ENCODE measurements at regions of chr14 and their contacts with region 1.

Region 1: GRCh38 chr14:69504775-69505174 is 20.2 kb downstream of the PLEKHD1 start:
- H3K4me3 ChIP-seq: no peak overlapping the region
- H3K27ac ChIP-seq: no peak overlapping the region
- H3K4me1 ChIP-seq: peaks cover 5% of the 10 kb centered on the region
- CTCF ChIP-seq: no peak

Region 2: DNA sequence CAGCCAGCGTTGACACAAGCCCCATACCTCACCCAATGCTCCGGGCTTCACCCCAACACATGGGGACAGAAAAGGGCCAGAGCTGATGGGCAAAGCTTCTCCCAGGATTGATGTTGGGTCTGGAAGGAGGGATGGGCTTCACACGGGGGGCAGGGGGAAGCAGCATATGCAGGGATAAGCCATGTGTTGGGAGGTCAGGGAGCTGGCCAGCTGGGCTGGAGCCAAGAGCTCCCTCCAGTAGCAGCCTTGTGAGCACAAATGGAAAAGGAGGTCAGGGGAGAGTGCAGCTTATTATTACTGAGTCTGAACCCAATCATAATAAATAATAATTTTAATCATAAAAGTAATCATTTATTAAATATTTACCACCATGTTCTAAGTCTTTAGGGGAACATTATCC is 11.0 kb before region 1 on chr14:
- CTCF ChIA-PET with region 1: interaction called, 18 read pairs
- POLR2A ChIA-PET with region 1: no interaction called
- H3K4me3 ChIP-seq: no peak overlapping the region
- H3K27ac ChIP-seq: no peak overlapping the region
- H3K4me1 ChIP-seq: no peaks in the 10 kb centered on the region
- CTCF ChIP-seq: no peak

Region 3: GRCh38 chr14:70036665-70037064 is 531.9 kb after region 1 on chr14:
- CTCF ChIA-PET with region 1: no interaction called
- POLR2A ChIA-PET with region 1: no interaction called
- H3K4me3 ChIP-seq: no peak overlapping the region
- H3K27ac ChIP-seq: no peak overlapping the region
- H3K4me1 ChIP-seq: no peaks in the 10 kb centered on the region
- CTCF ChIP-seq: no peak